ENCODE measurements at regions of chr10 and their contacts with region 1.

Region 1: GRCh38 chr10:73779539-73780197 is 2.2 kb upstream of the CHCHD1 start:
- DNase-seq: no peak
- ATAC-seq: no peak
- H3K4me3 ChIP-seq: no peak overlapping the region
- H3K27ac ChIP-seq: peak overlapping the region; percentile 62
- H3K4me1 ChIP-seq: peaks cover 45% of the 10 kb centered on the region
- H3K27me3 ChIP-seq: no peaks in the 10 kb centered on the region
- CTCF ChIP-seq: no peak

Region 2: DNA sequence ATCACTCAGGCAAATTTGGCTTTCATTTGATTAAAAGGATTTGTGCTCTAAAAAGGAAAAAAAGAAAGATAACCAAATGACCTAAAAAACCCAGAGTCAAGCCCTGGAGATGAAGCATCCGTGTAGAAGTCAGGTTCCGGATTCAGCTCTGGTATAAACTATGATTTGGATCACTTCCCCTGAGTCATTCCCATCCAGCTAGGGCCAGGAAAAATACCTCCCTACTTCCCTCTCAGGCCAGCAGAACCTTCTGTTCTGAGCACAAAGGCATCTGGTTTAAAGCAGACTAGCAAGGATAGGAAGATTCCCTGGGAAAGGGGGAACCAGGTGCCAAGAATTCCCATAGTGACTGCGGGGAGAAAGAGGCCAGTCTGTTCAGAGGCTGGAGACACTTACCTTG is 57.4 kb after region 1 on chr10:
- CTCF ChIA-PET with region 1: interaction called, 10 read pairs
- POLR2A ChIA-PET with region 1: no interaction called
- in situ Hi-C with region 1: no loop called
- intact Hi-C with region 1: no loop called
- DNase-seq: no peak
- ATAC-seq: no peak
- H3K4me3 ChIP-seq: no peak overlapping the region
- H3K27ac ChIP-seq: no peak overlapping the region
- H3K4me1 ChIP-seq: no peaks in the 10 kb centered on the region
- H3K27me3 ChIP-seq: no peaks in the 10 kb centered on the region
- CTCF ChIP-seq: no peak

Region 3: GRCh38 chr10:73874267-73875138 is 94.8 kb after region 1 on chr10 and contains the start of gene CAMK2G:
- CTCF ChIA-PET with region 1: no interaction called
- POLR2A ChIA-PET with region 1: no interaction called
- in situ Hi-C with region 1: no loop called
- intact Hi-C with region 1: no loop called
- DNase-seq: no peak
- ATAC-seq: peak; percentile 97
- H3K4me3 ChIP-seq: peak within 1 kb of the TSS; percentile 56 to 72
- H3K27ac ChIP-seq: peak within 1 kb of the TSS; percentile 57
- H3K4me1 ChIP-seq: peaks cover 27% of the 10 kb centered on the region
- H3K27me3 ChIP-seq: no peaks in the 10 kb centered on the region
- CTCF ChIP-seq: no peak
- total RNA-seq, gene CAMK2G: 41.4 TPM

Region 4: GRCh38 chr10:74151056-74151878 is 371.6 kb after region 1 on chr10 and contains the start of gene ADK:
- CTCF ChIA-PET with region 1: interaction called, 11 read pairs
- POLR2A ChIA-PET with region 1: no interaction called
- in situ Hi-C with region 1: no loop called
- intact Hi-C with region 1: no loop called
- DNase-seq: no peak
- ATAC-seq: peak; percentile 96
- H3K4me3 ChIP-seq: peak within 1 kb of the TSS; percentile 88 to 97
- H3K27ac ChIP-seq: peak within 1 kb of the TSS; percentile 96
- H3K4me1 ChIP-seq: peaks cover 29% of the 10 kb centered on the region
- H3K27me3 ChIP-seq: no peaks in the 10 kb centered on the region
- CTCF ChIP-seq: no peak
- total RNA-seq, gene ADK: 64.5 TPM

Measured in Panc1 (cell line).